Endothelial cell of umbilical vein (primary cell): ENCODE measurements at regions of chr11 and their contacts with region 1.

Region 1: GRCh38 chr11:131694526-131695424 is 324.4 kb downstream of the NTM start:
- DNase-seq: peak; percentile 75
- H3K4me3 ChIP-seq: no peak overlapping the region
- H3K27ac ChIP-seq: no peak overlapping the region
- H3K4me1 ChIP-seq: no peaks in the 10 kb centered on the region
- H3K27me3 ChIP-seq: peaks cover 0 to 2% of the 10 kb centered on the region in 2 experiments
- CTCF ChIP-seq: peak; percentile 92 to 97
- POLR2A ChIP-seq: no peak

Region 2: GRCh38 chr11:131629925-131630540 is 64.7 kb before region 1 on chr11:
- CTCF ChIA-PET with region 1: no interaction called
- POLR2A ChIA-PET with region 1: no interaction called
- dilution Hi-C with region 1: no loop called
- intact Hi-C with region 1: no loop called
- DNase-seq: no peak
- H3K4me3 ChIP-seq: no peak overlapping the region
- H3K27ac ChIP-seq: no peak overlapping the region
- H3K4me1 ChIP-seq: no peaks in the 10 kb centered on the region
- H3K27me3 ChIP-seq: no peaks in the 10 kb centered on the region
- CTCF ChIP-seq: no peak
- POLR2A ChIP-seq: no peak

Region 3: DNA sequence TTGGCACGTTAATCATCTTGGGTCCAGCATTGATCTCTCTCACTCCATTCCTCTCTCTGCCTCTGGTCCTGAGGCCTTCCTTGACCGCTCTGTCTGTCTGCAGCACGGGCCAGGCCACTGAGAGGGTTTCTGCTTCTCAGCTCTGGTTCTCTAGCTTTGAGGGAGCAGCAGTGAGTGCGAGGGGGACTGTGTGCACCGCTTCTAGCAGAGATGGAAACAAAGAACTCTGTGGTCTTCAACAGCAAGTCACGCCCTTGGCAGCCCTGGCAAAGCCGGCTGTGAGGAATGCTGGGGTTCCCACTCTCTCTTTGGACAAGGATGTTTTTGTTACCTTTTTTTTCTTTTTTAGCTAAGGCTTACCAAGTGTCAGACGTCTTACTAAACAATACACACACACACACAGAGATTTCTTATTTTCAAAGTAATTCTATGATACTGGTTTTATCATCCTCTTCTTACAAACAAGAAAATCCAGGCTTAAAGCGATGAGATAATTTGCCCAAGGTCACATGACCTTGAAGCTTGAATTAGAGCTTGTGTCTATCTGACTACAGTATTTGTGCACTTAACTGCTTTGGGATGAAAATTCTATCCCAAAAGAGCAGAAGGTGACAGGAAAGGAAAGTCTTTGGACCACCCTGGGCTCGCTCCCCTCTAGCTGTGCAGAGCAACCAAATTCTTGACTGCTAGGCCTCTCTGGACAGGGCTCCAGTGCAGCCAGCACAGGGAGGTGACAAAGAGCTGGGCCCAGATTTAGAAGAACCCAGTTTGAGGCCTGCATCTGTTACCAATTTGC is 31.2 kb before region 1 on chr11:
- CTCF ChIA-PET with region 1: no interaction called
- POLR2A ChIA-PET with region 1: no interaction called
- dilution Hi-C with region 1: no loop called
- intact Hi-C with region 1: no loop called
- DNase-seq: no peak
- H3K4me3 ChIP-seq: no peak overlapping the region
- H3K27ac ChIP-seq: no peak overlapping the region
- H3K4me1 ChIP-seq: no peaks in the 10 kb centered on the region
- H3K27me3 ChIP-seq: peaks cover 0 to 2% of the 10 kb centered on the region in 2 experiments
- CTCF ChIP-seq: no peak
- POLR2A ChIP-seq: no peak

Region 4: GRCh38 chr11:131809203-131809918 is 114.6 kb after region 1 on chr11:
- CTCF ChIA-PET with region 1: interaction called, 11 read pairs
- POLR2A ChIA-PET with region 1: no interaction called
- dilution Hi-C with region 1: no loop called
- intact Hi-C with region 1: no loop called
- DNase-seq: no peak
- H3K4me3 ChIP-seq: no peak overlapping the region
- H3K27ac ChIP-seq: no peak overlapping the region
- H3K4me1 ChIP-seq: peaks cover 11% of the 10 kb centered on the region
- H3K27me3 ChIP-seq: peaks cover 0 to 6% of the 10 kb centered on the region in 2 experiments
- CTCF ChIP-seq: no peak
- POLR2A ChIP-seq: no peak

Region 5: GRCh38 chr11:131889146-131889577 is 194.4 kb after region 1 on chr11:
- CTCF ChIA-PET with region 1: interaction called, 11 read pairs
- POLR2A ChIA-PET with region 1: no interaction called
- dilution Hi-C with region 1: no loop called
- intact Hi-C with region 1: no loop called
- DNase-seq: no peak
- H3K4me3 ChIP-seq: no peak overlapping the region
- H3K27ac ChIP-seq: peak overlapping the region; percentile 45
- H3K4me1 ChIP-seq: peaks cover 13% of the 10 kb centered on the region
- H3K27me3 ChIP-seq: peaks cover 0 to 2% of the 10 kb centered on the region in 2 experiments
- CTCF ChIP-seq: no peak
- POLR2A ChIP-seq: no peak

Region 6: DNA sequence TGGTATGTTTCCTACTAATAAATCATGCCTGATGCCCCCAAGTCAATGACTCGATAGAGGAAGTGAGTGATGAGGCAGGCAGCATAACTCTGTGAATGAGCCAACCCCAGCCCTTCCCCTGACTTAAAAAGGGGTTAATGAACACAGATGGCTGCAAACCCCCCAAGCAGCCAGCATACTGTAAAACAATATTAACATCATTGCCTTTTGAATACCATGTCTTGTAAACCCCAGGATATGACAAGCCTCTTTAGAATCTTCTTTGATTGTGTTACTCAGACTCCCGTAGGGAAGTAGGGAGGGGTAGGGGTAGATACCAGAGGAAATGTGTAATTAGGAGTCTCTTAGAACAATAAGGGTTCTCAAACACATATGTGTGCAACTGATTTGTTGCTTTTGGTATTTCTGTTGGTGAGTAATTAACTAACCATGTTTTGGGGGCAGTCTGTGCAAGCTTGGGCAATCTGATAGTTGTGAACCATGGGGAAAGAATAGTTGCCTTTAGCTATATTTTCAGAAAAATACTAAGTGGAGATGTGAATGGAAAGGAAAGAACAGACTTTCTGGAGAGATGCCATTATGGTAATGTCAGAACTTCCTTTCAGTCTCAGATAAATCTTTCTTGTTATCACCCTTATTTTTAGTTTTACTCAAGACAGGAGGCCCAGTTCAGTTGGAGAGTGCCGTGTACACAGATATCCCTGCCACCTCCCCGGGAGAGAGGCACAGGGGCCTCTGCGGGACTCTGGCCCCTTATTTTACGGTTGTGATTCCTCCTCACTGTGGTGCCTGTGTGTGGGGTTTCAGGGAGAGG is 377.5 kb after region 1 on chr11:
- CTCF ChIA-PET with region 1: interaction called, 4 read pairs
- POLR2A ChIA-PET with region 1: no interaction called
- dilution Hi-C with region 1: no loop called
- intact Hi-C with region 1: loop called (anchors 1 kb)
- DNase-seq: peak; percentile 96
- H3K4me3 ChIP-seq: no peak overlapping the region
- H3K27ac ChIP-seq: peak overlapping the region; percentile 99
- H3K4me1 ChIP-seq: peaks cover 32% of the 10 kb centered on the region
- H3K27me3 ChIP-seq: no peaks in the 10 kb centered on the region
- CTCF ChIP-seq: no peak
- POLR2A ChIP-seq: peak; percentile 68

Region 7: DNA sequence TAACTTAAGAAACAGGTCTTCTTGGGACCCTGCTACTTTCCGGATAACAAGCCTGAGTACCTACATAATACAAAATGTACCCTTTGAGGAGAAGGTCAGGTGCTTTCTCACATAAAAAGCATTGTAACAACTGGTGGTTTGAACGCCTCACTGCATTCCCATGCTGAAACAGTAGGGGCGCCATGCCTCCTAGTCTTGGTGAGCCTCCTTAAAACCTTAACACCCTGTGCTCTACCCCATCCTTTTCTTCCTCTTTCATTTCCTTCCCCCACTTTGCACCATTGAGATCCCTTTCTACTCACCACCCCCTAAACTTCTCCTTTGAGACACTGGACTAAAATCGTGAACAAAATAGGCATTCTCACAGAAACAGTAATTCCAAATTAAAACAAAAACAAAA is 404.9 kb after region 1 on chr11:
- CTCF ChIA-PET with region 1: no interaction called
- POLR2A ChIA-PET with region 1: no interaction called
- dilution Hi-C with region 1: no loop called
- intact Hi-C with region 1: no loop called
- DNase-seq: no peak
- H3K4me3 ChIP-seq: no peak overlapping the region
- H3K27ac ChIP-seq: no peak overlapping the region
- H3K4me1 ChIP-seq: no peaks in the 10 kb centered on the region
- H3K27me3 ChIP-seq: no peaks in the 10 kb centered on the region
- CTCF ChIP-seq: peak; percentile 50 to 51
- POLR2A ChIP-seq: no peak

Region 8: DNA sequence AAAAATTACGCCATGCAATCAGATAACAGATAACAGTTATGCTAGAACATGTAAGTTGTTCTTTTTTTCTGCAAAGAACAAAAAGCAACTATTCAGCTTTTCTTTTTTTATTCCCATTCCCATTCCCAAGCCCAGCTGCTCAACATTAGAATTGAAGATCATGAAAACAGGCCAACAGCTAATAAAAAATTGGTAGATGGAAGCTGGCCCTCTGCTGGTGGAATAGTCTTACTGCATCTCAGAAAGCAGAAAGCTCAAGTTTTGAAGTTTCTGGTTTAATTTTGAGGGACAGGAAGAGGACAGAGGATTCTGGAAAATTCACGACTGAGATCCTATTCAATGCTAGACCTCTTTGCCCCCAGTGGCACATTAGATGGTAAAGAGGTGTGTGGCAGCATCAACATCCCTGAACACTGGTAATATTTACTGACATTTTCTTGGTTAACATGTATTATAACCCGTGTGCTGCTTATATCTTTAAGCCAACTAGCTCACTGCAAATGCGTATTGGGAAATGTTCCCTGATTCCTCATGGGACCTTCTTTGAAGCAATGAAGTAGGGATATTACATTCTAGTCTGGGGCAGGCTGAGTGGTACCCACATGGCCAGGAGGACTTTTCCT is 1246.4 kb after region 1 on chr11:
- CTCF ChIA-PET with region 1: interaction called, 74 read pairs
- POLR2A ChIA-PET with region 1: no interaction called
- dilution Hi-C with region 1: no loop called
- intact Hi-C with region 1: no loop called
- DNase-seq: peak; percentile 19
- H3K4me3 ChIP-seq: no peak overlapping the region
- H3K27ac ChIP-seq: no peak overlapping the region
- H3K4me1 ChIP-seq: no peaks in the 10 kb centered on the region
- H3K27me3 ChIP-seq: peaks cover 10 to 17% of the 10 kb centered on the region in 2 experiments
- CTCF ChIP-seq: peak; percentile 67 to 71
- POLR2A ChIP-seq: no peak